ENCODE measurements at regions of chr16 and their contacts with region 1.

Region 1: GRCh38 chr16:2752035-2752849 is at the start of gene SRRM2:
- DNase-seq: peak; percentile 98
- ATAC-seq: peak; percentile 96
- total RNA-seq, gene SRRM2: 239 TPM

Region 2: DNA sequence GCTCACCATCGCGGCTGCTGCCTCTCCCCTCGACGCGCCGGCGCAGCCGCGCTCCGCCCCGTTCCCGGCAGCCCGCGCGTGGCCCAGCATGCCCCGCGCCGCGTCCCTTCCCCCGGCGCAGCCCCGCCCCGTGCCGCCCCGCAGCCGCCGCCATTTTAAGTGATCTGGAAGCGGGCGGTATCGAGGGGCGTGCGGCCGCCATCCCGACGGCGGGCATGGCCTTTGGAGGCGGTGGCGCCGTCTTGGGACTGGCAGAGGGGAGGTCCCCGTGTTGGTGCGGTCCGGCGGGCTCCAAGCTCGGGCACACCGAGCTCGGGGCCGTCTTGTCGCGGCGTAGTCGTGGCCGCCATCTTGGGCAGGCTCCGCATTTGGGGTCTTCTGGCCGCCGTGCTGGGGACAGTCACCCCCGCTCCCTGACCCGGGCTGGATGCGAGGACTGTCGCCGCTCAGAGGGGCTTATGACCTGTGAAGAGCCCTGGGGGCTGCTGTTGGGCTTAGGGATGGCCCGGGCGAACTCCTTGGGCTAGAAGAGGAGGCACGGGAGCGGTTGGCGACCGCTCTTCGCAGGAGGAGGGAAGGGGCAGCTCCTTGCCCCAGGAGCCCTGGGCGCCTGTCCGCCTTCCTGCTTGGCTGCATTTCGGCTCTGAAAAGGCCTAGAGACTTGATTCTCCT is 25.1 kb after region 1 on chr16 and contains the start of gene ELOB:
- intact Hi-C with region 1: loop called (anchors 1 kb)
- DNase-seq: peak; percentile 96
- ATAC-seq: peak; percentile 95
- total RNA-seq, gene ELOB: 336 TPM

Region 3: GRCh38 chr16:2816751-2817339 is 64.6 kb after region 1 on chr16 and contains the start of gene PRSS21:
- intact Hi-C with region 1: no loop called
- DNase-seq: no peak
- ATAC-seq: no peak
- total RNA-seq, gene PRSS21: not detected

Measured in Right ventricle myocardium inferior (tissue), 1 donor.